ENCODE measurements at regions of chr6 and their contacts with region 1.

Region 1: GRCh38 chr6:33271458-33272274 is at the starts of genes RPS18 and VPS52:
- DNase-seq: peak; percentile 100
- ATAC-seq: peak; percentile 92
- H3K4me3 ChIP-seq: peak within 1 kb of the TSS; percentile 75 to 89 (median 82)
- H3K27ac ChIP-seq: peak within 1 kb of the TSS; percentile 95
- H3K4me1 ChIP-seq: peaks cover 48% of the 10 kb centered on the region
- H3K27me3 ChIP-seq: no peaks in the 10 kb centered on the region; a peak in 1 of 5 replicates
- CTCF ChIP-seq: no peak
- EP300 ChIP-seq: peak in 1 of 2 experiments; percentile 10; a peak in 1 of 4 replicates
- POLR2A ChIP-seq: peak; percentile 99
- RAD21 ChIP-seq: peak; percentile 42
- total RNA-seq, gene RPS18: 3,896 and 4,448 TPM in 2 replicates
- total RNA-seq, gene VPS52: 40.2 and 48.9 TPM in 2 replicates

Region 2: GRCh38 chr6:33183071-33183683 is 88.5 kb before region 1 on chr6:
- CTCF ChIA-PET with region 1: no interaction called
- POLR2A ChIA-PET with region 1: no interaction called
- in situ Hi-C with region 1: no loop called
- intact Hi-C with region 1: no loop called
- DNase-seq: no peak
- ATAC-seq: no peak
- H3K4me3 ChIP-seq: no peak overlapping the region; a peak in 1 of 6 replicates
- H3K27ac ChIP-seq: no peak overlapping the region
- H3K4me1 ChIP-seq: peaks cover 6% of the 10 kb centered on the region; the same call in 1 of the 2 replicates
- H3K27me3 ChIP-seq: peaks cover 2 to 17% of the 10 kb centered on the region in 2 experiments; a peak in 1 of 5 replicates
- CTCF ChIP-seq: no peak
- EP300 ChIP-seq: no peak
- POLR2A ChIP-seq: no peak
- RAD21 ChIP-seq: no peak

Region 3: DNA sequence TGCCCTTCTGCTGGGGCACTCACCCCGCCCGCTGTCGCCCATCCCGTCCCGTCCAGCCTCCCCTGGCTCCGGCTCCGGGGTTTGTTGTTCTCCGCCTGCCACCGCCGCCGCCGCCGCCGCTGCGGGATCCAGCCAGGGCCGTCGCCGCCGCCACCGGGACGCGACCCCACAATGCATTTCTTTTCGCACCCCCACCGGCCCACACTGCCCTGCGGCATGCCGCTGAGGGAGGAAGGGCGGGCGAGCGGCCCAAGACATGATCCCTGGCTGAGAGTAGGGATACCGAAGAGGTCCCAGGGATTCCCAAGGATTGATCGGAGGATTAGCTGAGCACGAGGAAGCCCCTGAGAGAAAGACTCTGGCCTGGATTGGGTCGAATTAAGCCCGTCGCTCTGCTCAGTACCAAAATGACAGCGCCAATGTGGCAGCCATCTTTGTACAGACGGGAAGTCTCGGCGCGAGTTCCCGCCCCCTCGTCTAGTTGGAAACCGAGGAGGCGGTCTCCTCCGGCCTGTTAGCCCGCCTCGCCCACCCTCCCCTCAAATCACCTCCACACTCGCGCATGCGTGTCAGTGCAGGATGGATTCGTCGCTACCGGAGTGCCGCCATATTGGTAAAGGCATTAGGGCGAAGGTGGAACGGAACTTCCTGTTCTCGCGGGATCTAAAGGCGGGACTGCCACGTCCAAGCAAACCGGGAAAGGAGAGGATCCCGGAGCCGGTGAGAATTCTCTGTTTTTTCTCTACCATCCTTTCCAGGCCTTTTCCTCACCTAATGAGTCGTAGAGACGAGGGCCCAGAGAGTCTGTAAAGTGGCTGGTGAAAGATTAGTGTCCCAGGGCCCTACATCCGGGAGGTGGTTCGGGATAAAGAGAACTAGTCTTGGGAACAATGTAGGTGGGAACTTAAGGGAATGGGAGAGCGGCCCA is 71.2 kb before region 1 on chr6 and contains the starts of genes RXRB and SLC39A7:
- CTCF ChIA-PET with region 1: no interaction called
- POLR2A ChIA-PET with region 1: interaction called, 22 read pairs
- in situ Hi-C with region 1: no loop called
- intact Hi-C with region 1: loop called (anchors 1 kb)
- DNase-seq: peak; percentile 100
- ATAC-seq: peak; percentile 48
- H3K4me3 ChIP-seq: peak within 1 kb of the TSS; percentile 87 to 93 (median 93)
- H3K27ac ChIP-seq: peak within 1 kb of the TSS; percentile 99
- H3K4me1 ChIP-seq: peaks cover 66% of the 10 kb centered on the region
- H3K27me3 ChIP-seq: peaks cover 0 to 4% of the 10 kb centered on the region in 2 experiments; a peak in 1 of 5 replicates
- CTCF ChIP-seq: no peak
- EP300 ChIP-seq: peak in 1 of 2 experiments; percentile 17; a peak in 2 of 4 replicates
- POLR2A ChIP-seq: peak in 1 of 2 experiments; percentile 90; a peak in 2 of 4 replicates
- RAD21 ChIP-seq: peak; percentile 28; the same call in 1 of the 2 replicates
- total RNA-seq, gene RXRB: 21.2 and 26.7 TPM in 2 replicates
- total RNA-seq, gene SLC39A7: 127 and 229 TPM in 2 replicates

Region 4: GRCh38 chr6:33254591-33254990 is 17.1 kb before region 1 on chr6:
- CTCF ChIA-PET with region 1: no interaction called
- POLR2A ChIA-PET with region 1: interaction called, 94 read pairs
- in situ Hi-C with region 1: no loop called
- intact Hi-C with region 1: no loop called
- DNase-seq: no peak
- ATAC-seq: no peak
- H3K4me3 ChIP-seq: no peak overlapping the region
- H3K27ac ChIP-seq: no peak overlapping the region
- H3K4me1 ChIP-seq: peaks cover 26% of the 10 kb centered on the region
- H3K27me3 ChIP-seq: no peaks in the 10 kb centered on the region
- CTCF ChIP-seq: no peak
- EP300 ChIP-seq: no peak
- POLR2A ChIP-seq: no peak
- RAD21 ChIP-seq: no peak

Region 5: DNA sequence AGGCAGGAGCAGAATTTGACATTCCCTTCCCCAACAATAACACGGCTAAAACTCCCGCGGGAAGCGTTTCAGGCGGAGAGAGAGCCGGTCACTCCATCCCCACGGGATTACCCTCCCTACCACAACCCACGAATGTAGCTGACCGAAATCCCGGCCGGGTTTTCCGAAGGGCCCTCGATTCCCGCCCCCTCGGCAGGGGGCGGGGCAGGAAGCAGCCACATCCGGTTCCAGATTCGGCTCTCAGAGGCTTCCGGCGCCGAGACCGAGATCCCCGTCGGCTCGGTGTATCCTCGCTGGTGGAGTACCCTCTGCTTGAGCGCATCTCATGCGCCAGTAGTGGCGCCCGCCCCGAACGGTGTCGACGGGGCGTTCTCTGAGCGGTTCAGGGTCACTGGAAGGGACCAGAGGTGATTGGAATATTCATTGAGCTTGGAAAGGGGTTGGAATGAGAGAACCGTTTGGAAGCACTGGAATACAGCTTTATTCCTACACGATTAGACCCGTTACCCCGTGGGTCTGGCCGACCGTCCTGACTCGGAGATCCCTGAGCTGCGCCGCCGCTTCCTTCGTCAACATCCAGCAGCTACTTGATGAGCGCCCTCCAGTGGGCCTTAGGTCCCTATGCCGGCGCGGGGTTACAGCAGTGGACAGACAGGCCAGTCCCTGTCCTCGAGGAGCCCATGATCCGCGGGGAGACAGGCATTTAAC is 27.7 kb after region 1 on chr6:
- CTCF ChIA-PET with region 1: no interaction called
- POLR2A ChIA-PET with region 1: interaction called, 32 read pairs
- in situ Hi-C with region 1: no loop called
- intact Hi-C with region 1: no loop called
- DNase-seq: peak; percentile 88
- ATAC-seq: peak; percentile 73
- H3K4me3 ChIP-seq: peak overlapping the region; percentile 75 to 88 (median 79)
- H3K27ac ChIP-seq: peak overlapping the region; percentile 93
- H3K4me1 ChIP-seq: peaks cover 27% of the 10 kb centered on the region
- H3K27me3 ChIP-seq: no peaks in the 10 kb centered on the region; a peak in 1 of 5 replicates
- CTCF ChIP-seq: peak; percentile 98
- EP300 ChIP-seq: peak in 1 of 2 experiments; percentile 27; a peak in 1 of 4 replicates
- POLR2A ChIP-seq: peak; percentile 88 to 95
- RAD21 ChIP-seq: peak; percentile 74

Region 6: GRCh38 chr6:33454009-33454946 is 182.6 kb after region 1 on chr6 and contains the start of gene ZBTB9:
- CTCF ChIA-PET with region 1: no interaction called
- POLR2A ChIA-PET with region 1: interaction called, 11 read pairs
- in situ Hi-C with region 1: no loop called
- intact Hi-C with region 1: no loop called
- DNase-seq: peak; percentile 96
- ATAC-seq: peak; percentile 99
- H3K4me3 ChIP-seq: peak within 1 kb of the TSS; percentile 92 to 100 (median 95)
- H3K27ac ChIP-seq: peak within 1 kb of the TSS; percentile 46
- H3K4me1 ChIP-seq: peaks cover 20% of the 10 kb centered on the region
- H3K27me3 ChIP-seq: no peaks in the 10 kb centered on the region; a peak in 1 of 5 replicates
- CTCF ChIP-seq: peak; percentile 49
- EP300 ChIP-seq: no peak
- POLR2A ChIP-seq: peak; percentile 87 to 98
- RAD21 ChIP-seq: 0 out of 2 replicates have a peak, but pooled peaks have one; percentile 28
- total RNA-seq, gene ZBTB9: 9.2 and 11.5 TPM in 2 replicates